SK-N-SH (cell line): ENCODE measurements at regions of chr19 and their contacts with region 1.

Region 1: GRCh38 chr19:4172861-4173473 is 9.4 kb downstream of the SIRT6 start:
- DNase-seq: peak; percentile 84
- H3K4me3 ChIP-seq: peak overlapping the region; percentile 24 to 44; a peak in 1 of 4 replicates
- H3K27ac ChIP-seq: no peak overlapping the region
- H3K4me1 ChIP-seq: peaks cover 0 to 8% of the 10 kb centered on the region in 2 experiments; a peak in 1 of 4 replicates
- H3K27me3 ChIP-seq: peaks cover 16% of the 10 kb centered on the region
- CTCF ChIP-seq: no peak
- EP300 ChIP-seq: no peak
- RAD21 ChIP-seq: no peak

Region 2: GRCh38 chr19:3914199-3914598 is 258.8 kb before region 1 on chr19:
- CTCF ChIA-PET with region 1: no interaction called
- POLR2A ChIA-PET with region 1: no interaction called
- DNase-seq: no peak
- H3K4me3 ChIP-seq: no peak overlapping the region
- H3K27ac ChIP-seq: no peak overlapping the region
- H3K4me1 ChIP-seq: no peaks in the 10 kb centered on the region
- H3K27me3 ChIP-seq: no peaks in the 10 kb centered on the region
- CTCF ChIP-seq: no peak
- EP300 ChIP-seq: no peak
- RAD21 ChIP-seq: no peak

Region 3: GRCh38 chr19:4152241-4152998 is 20.5 kb before region 1 on chr19:
- CTCF ChIA-PET with region 1: interaction called, 14 read pairs
- POLR2A ChIA-PET with region 1: no interaction called
- DNase-seq: peak; percentile 19
- H3K4me3 ChIP-seq: no peak overlapping the region
- H3K27ac ChIP-seq: no peak overlapping the region
- H3K4me1 ChIP-seq: no peaks in the 10 kb centered on the region
- H3K27me3 ChIP-seq: peaks cover 15% of the 10 kb centered on the region; the same call in 1 of the 2 replicates
- CTCF ChIP-seq: no peak
- EP300 ChIP-seq: no peak
- RAD21 ChIP-seq: no peak

Region 4: GRCh38 chr19:4199699-4200293 is 26.8 kb after region 1 on chr19:
- CTCF ChIA-PET with region 1: interaction called, 35 read pairs
- POLR2A ChIA-PET with region 1: no interaction called
- DNase-seq: peak; percentile 53
- H3K4me3 ChIP-seq: no peak overlapping the region
- H3K27ac ChIP-seq: no peak overlapping the region
- H3K4me1 ChIP-seq: no peaks in the 10 kb centered on the region
- H3K27me3 ChIP-seq: peaks cover 71% of the 10 kb centered on the region
- CTCF ChIP-seq: peak; percentile 24
- EP300 ChIP-seq: no peak
- RAD21 ChIP-seq: no peak

Region 5: DNA sequence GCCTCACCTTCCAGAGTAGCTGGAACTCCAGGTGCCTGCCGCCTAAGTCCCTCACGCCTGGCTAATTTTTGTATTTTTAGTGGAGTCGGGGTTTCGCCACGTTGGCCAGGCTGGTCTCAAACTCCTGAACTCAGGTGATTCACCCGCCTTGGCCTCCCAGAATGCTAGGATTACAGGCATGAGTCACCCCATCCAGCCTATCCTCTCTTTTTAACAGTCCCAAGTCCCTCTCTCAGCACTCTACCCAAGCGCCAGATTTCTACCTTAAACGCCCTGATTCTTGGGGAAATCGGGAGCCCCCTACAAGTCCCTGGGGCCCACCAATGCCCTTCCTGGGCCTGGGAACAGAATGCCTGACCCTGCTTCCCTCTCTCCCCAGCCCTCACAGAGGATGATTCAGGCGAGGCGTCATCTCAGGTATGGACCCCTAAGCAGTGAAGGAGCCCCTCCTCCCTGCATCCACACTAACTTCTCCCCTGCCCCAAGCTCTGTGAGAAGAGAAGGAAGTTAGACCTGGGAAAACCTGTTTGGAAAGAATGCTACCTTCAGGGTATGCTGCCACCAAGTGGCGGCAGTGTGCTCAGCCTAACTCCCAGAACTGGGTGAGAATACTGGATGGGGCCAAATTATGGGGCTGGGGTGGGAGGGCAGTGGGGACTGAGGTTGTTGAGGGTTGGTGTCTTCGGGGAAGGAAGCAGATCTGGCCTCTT is 35.6 kb after region 1 on chr19:
- CTCF ChIA-PET with region 1: interaction called, 35 read pairs
- POLR2A ChIA-PET with region 1: no interaction called
- DNase-seq: peak; percentile 68
- H3K4me3 ChIP-seq: no peak overlapping the region
- H3K27ac ChIP-seq: no peak overlapping the region
- H3K4me1 ChIP-seq: no peaks in the 10 kb centered on the region
- H3K27me3 ChIP-seq: peaks cover 14% of the 10 kb centered on the region
- CTCF ChIP-seq: peak; percentile 55
- EP300 ChIP-seq: no peak
- RAD21 ChIP-seq: no peak